IMR-90 (cell line): ENCODE measurements at regions of chr4 and their contacts with region 1.

Region 1: GRCh38 chr4:30821859-30822612 is 101.9 kb downstream of the PCDH7 start:
- DNase-seq: peak; percentile 72
- ATAC-seq: peak; percentile 86
- H3K4me3 ChIP-seq: no peak overlapping the region
- H3K27ac ChIP-seq: no peak overlapping the region
- H3K4me1 ChIP-seq: no peaks in the 10 kb centered on the region
- H3K27me3 ChIP-seq: no peaks in the 10 kb centered on the region
- CTCF ChIP-seq: no peak
- POLR2A ChIP-seq: no peak
- RAD21 ChIP-seq: no peak

Region 2: GRCh38 chr4:30789219-30789671 is 32.8 kb before region 1 on chr4:
- CTCF ChIA-PET with region 1: no interaction called
- POLR2A ChIA-PET with region 1: no interaction called
- dilution Hi-C with region 1: no loop called
- in situ Hi-C with region 1: no loop called
- intact Hi-C with region 1: loop called (anchors 5 kb)
- DNase-seq: no peak
- ATAC-seq: peak; percentile 32; the same call in 1 of the 2 replicates
- H3K4me3 ChIP-seq: no peak overlapping the region
- H3K27ac ChIP-seq: no peak overlapping the region
- H3K4me1 ChIP-seq: no peaks in the 10 kb centered on the region
- H3K27me3 ChIP-seq: no peaks in the 10 kb centered on the region
- CTCF ChIP-seq: no peak
- POLR2A ChIP-seq: no peak
- RAD21 ChIP-seq: no peak

Region 3: DNA sequence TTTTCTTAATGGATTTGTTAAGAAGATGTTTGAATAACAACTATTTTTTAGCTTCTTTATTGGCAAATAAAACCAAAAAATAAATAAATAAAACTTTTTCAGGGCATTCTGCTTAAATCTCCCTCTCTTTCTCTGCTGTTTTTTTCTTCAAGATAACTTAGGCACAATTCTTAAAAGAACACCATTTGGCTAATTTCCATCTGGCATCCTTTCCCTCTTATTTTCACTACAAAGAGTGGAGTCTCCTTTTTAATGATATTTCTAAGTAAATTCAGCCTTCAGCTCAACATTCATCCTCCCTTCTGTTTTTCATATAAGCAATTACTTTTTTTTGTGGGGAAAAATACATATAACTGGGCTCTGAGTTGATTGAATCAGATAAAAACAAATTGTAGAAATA is 13.8 kb before region 1 on chr4:
- CTCF ChIA-PET with region 1: no interaction called
- POLR2A ChIA-PET with region 1: no interaction called
- dilution Hi-C with region 1: no loop called
- in situ Hi-C with region 1: no loop called
- intact Hi-C with region 1: no loop called
- DNase-seq: no peak
- ATAC-seq: no peak
- H3K4me3 ChIP-seq: no peak overlapping the region
- H3K27ac ChIP-seq: no peak overlapping the region
- H3K4me1 ChIP-seq: no peaks in the 10 kb centered on the region
- H3K27me3 ChIP-seq: no peaks in the 10 kb centered on the region
- CTCF ChIP-seq: no peak
- POLR2A ChIP-seq: no peak
- RAD21 ChIP-seq: no peak